Panc1 (cell line): ENCODE measurements at regions of chr3 and their contacts with region 1.

Region 1: DNA sequence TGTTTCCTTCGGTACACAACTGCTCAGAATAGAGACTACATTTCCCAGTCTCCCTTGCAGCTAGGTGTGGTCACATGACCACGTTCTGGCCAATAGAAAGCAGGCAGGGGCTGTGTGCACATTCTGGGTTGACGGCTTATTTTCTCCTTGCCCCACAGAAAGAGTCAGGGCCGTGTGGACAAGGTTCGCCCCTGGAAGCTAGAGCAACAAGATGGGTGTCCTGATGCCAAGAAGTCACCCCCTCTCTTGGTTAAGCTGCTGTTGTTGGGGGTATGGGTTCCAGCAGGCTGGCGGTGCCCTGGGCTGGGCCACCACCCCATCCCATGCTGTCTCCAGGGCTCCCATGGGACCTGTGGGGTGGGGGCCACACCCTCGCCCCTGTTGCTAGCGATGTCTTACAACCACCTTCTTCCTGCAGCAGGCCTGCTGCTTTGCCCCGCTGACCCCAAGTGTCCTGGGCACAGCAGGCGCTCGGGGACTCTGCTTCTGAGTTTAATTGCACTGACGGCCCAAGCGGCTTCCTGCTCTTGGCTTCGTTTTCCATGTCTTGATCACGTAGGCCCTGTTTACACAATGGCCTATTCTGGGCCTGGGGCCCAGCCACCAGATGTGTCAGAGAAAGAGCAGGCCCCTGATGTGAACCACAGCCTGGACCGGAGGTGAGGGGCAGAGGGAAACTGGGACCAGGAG is 24.9 kb downstream of the ABTB1 start:
- DNase-seq: no peak
- ATAC-seq: peak; percentile 80
- H3K4me3 ChIP-seq: no peak overlapping the region
- H3K27ac ChIP-seq: no peak overlapping the region
- H3K4me1 ChIP-seq: no peaks in the 10 kb centered on the region
- H3K27me3 ChIP-seq: no peaks in the 10 kb centered on the region
- CTCF ChIP-seq: no peak

Region 2: GRCh38 chr3:127328421-127328820 is 369.3 kb before region 1 on chr3:
- CTCF ChIA-PET with region 1: no interaction called
- POLR2A ChIA-PET with region 1: no interaction called
- in situ Hi-C with region 1: no loop called
- intact Hi-C with region 1: no loop called
- DNase-seq: no peak
- ATAC-seq: no peak
- H3K4me3 ChIP-seq: no peak overlapping the region
- H3K27ac ChIP-seq: no peak overlapping the region
- H3K4me1 ChIP-seq: no peaks in the 10 kb centered on the region
- H3K27me3 ChIP-seq: peaks cover 7% of the 10 kb centered on the region
- CTCF ChIP-seq: no peak

Region 3: DNA sequence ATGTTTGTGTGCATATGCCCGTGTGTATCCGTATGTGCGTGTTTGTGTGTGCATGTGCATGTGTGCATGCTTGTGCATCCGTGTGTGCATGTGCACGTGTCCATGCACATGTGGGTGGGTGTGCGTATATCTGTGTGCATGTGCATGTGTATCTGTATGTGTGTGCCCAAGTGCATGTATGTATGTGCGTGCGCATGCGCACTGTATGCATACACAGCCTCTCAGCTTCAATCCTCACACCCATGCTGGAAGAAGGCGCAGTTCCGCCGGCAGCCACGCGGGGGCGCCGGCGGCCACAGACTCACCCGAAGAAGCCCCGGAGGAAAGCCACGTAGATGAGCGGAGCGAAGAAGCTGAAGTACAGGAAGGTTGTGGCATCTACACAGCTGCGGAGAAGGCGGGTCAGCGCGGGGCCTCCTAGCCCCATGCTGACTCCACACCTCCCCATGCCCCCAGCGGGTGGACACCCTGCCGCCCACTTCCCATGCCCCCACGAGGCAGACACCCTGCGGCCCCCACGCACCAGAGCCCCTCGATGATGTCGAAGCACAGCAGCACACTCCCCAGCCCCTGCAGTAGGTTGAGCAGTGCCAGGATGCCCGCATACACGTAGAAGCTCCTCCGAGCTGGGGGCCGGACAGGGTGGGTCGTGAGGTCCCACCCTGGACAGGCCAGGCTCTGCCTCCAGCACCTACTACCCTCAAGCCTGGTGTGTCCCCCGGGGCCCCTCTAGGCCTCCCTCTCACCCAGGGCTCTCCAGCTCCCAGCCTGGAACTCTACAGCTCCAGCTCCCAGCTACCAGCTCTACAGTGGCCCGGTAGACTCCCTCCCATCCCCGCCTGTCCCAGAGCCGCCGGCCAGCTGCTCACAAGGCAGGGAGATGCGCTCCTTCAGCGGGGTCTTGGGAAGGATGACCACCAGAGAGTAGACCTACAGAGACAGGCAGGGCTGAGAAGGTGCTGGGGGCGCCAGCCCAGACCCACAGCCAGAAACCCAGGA is 122.5 kb before region 1 on chr3:
- CTCF ChIA-PET with region 1: interaction called, 12 read pairs
- POLR2A ChIA-PET with region 1: no interaction called
- in situ Hi-C with region 1: no loop called
- intact Hi-C with region 1: no loop called
- DNase-seq: peak; percentile 82
- ATAC-seq: peak; percentile 96
- H3K4me3 ChIP-seq: no peak overlapping the region
- H3K27ac ChIP-seq: 0 out of 2 replicates have a peak overlapping the region, but pooled peaks have one; percentile 29
- H3K4me1 ChIP-seq: peaks cover 4% of the 10 kb centered on the region; the same call in 1 of the 2 replicates
- H3K27me3 ChIP-seq: no peaks in the 10 kb centered on the region
- CTCF ChIP-seq: peak; percentile 100

Region 4: DNA sequence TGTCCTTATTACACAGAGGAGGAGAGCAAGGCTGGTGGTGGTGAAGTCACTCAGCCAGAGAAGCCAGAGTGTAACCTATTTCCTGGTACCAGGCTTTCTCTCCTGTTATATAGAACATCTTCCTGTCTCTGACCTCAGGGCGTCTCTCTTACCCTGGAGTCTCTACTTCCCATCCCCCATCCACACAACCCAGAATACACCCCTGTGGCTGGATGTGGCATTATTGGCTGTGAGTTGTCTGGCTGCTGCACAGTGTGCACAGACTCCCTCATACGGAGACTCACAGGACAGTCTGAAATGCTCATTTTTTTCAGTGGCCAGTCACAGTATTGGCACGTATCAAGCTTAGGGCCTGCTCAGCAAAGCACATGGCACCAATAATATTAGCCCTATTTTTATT is 60.1 kb before region 1 on chr3:
- CTCF ChIA-PET with region 1: no interaction called
- POLR2A ChIA-PET with region 1: no interaction called
- in situ Hi-C with region 1: no loop called
- intact Hi-C with region 1: no loop called
- DNase-seq: no peak
- ATAC-seq: no peak
- H3K4me3 ChIP-seq: no peak overlapping the region
- H3K27ac ChIP-seq: no peak overlapping the region
- H3K4me1 ChIP-seq: no peaks in the 10 kb centered on the region
- H3K27me3 ChIP-seq: no peaks in the 10 kb centered on the region
- CTCF ChIP-seq: no peak

Region 5: GRCh38 chr3:127652231-127652995 is 45.3 kb before region 1 on chr3:
- CTCF ChIA-PET with region 1: interaction called, 8 read pairs
- POLR2A ChIA-PET with region 1: no interaction called
- in situ Hi-C with region 1: no loop called
- intact Hi-C with region 1: loop called (anchors 2 kb)
- DNase-seq: peak; percentile 36
- ATAC-seq: peak; percentile 94
- H3K4me3 ChIP-seq: no peak overlapping the region
- H3K27ac ChIP-seq: no peak overlapping the region
- H3K4me1 ChIP-seq: no peaks in the 10 kb centered on the region
- H3K27me3 ChIP-seq: no peaks in the 10 kb centered on the region
- CTCF ChIP-seq: peak; percentile 97

Region 6: GRCh38 chr3:127822698-127823425 is 125.2 kb after region 1 on chr3:
- CTCF ChIA-PET with region 1: no interaction called
- POLR2A ChIA-PET with region 1: no interaction called
- in situ Hi-C with region 1: no loop called
- intact Hi-C with region 1: loop called (anchors 10 kb)
- DNase-seq: no peak
- ATAC-seq: peak; percentile 68
- H3K4me3 ChIP-seq: peak overlapping the region; percentile 51 to 65
- H3K27ac ChIP-seq: no peak overlapping the region
- H3K4me1 ChIP-seq: no peaks in the 10 kb centered on the region
- H3K27me3 ChIP-seq: peaks cover 11% of the 10 kb centered on the region
- CTCF ChIP-seq: no peak

Region 7: DNA sequence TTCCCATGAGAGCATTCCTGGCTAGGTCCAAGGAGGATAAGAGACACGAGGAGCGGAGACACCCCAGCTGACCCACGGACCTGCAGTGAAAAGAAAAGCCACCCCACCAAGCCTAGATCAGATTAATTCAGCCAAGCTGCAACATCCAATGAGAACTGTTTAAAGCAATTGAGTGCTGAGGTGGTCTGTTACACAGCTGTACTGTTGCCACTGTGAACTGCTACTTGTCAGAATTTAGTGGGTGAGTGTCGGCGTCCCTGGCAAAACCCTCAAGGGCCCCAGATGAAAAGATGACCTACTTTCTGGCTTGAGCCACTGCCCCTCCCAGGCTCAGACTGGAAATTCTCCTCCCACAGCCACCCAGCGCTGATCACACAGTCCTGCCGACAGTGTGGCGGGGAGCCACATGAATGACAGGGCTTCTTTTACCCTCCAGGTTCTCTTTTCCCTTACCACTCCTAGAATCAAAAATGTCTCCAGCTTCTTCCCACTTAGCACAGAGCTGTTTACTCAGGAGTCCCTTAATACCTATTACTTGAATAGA is 190.9 kb after region 1 on chr3:
- CTCF ChIA-PET with region 1: interaction called, 10 read pairs
- POLR2A ChIA-PET with region 1: no interaction called
- in situ Hi-C with region 1: no loop called
- intact Hi-C with region 1: no loop called
- DNase-seq: no peak
- ATAC-seq: no peak
- H3K4me3 ChIP-seq: no peak overlapping the region
- H3K27ac ChIP-seq: no peak overlapping the region
- H3K4me1 ChIP-seq: no peaks in the 10 kb centered on the region
- H3K27me3 ChIP-seq: 0 out of 2 replicates have a peak, but pooled peaks cover 7% of the 10 kb centered on the region
- CTCF ChIP-seq: no peak

Region 8: DNA sequence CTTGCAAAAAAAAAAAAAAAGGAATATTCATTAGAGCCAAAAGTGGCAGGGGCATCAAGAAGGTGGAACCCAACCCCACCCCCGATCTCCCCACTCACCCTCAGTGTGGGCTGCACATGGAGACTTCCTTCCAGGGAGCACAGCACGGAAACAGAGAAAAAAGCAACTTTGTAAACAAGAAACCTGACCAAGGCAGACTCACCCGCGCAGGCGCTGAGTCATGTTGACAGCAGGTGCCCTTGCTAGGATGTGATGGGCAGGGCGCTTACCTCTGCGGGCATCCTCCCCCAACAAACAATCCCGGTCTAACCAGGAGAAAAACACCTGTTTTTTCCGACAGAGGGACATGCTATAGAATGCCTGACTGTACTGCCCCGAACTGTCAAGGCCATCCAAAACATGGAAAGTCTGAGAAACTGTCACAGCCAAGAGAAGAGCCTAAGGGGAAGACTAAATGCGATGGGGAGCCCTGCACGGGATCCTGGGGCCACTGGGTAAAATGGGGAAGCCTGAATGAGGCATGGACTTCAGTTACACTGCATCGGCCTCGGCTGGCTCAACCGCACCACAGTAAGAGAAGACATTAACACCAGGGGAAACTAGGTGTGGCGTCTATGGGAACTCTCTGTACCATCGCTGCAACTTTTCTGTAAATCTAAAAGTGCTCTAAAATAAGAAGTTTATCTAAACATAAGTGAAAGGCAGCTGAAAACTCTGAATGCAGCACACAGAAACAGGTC is 862.0 kb after region 1 on chr3:
- CTCF ChIA-PET with region 1: interaction called, 13 read pairs
- POLR2A ChIA-PET with region 1: no interaction called
- in situ Hi-C with region 1: no loop called
- intact Hi-C with region 1: no loop called
- DNase-seq: no peak
- ATAC-seq: peak; percentile 13; the same call in 1 of the 2 replicates
- H3K4me3 ChIP-seq: no peak overlapping the region
- H3K27ac ChIP-seq: no peak overlapping the region
- H3K4me1 ChIP-seq: no peaks in the 10 kb centered on the region
- H3K27me3 ChIP-seq: no peaks in the 10 kb centered on the region
- CTCF ChIP-seq: no peak